Caco-2 (cell line): ENCODE measurements at regions of chr5 and their contacts with region 1.

Region 1: DNA sequence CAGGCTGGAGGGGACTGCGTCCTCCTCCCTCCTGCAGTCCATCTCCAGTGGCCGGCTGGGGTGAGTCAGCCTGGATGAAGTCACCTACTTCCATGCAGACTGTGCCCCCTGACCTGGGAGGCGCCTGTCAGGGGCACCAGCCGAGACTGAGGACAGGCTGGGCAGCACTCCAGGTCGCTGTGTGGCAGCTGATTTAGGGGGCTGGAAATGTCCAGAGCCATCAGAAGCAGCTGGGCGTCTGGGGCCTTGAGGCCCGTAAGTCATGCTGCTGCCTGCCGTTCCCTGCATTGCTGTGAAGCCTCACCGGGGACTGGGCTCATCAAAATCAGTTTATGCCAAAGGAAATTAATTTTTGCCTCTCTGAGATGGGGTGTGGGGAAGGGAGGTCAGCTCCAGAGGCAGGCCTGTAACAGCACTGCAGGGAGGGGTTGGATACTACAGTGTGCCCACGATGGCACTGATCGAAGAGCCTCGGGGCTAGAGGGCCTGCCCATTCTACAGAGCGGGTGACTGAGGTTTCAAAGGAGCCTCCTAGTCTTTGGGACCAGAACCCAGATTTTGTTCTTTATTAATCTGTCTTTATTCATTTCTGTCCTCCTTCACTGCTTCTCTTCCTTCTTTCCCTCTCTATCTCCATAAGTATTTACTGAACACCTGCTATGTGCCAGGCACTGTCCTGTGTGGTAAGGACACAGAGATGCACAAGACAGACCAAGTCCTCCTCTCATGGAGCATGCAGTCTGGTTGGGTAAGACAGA is 70.4 kb upstream of the PSD2 start:
- DNase-seq: no peak
- H3K4me3 ChIP-seq: no peak overlapping the region
- H3K4me3 Mint-ChIP-seq: no peak overlapping the region
- H3K27ac Mint-ChIP-seq: no peak overlapping the region
- H3K4me1 ChIP-seq: peaks cover 4% of the 10 kb centered on the region; the same call in 1 of the 2 replicates
- H3K4me1 Mint-ChIP-seq: peaks cover 8% of the 10 kb centered on the region
- H3K27me3 ChIP-seq: no peaks in the 10 kb centered on the region
- H3K27me3 Mint-ChIP-seq: no peaks in the 10 kb centered on the region
- CTCF ChIP-seq: no peak

Region 2: DNA sequence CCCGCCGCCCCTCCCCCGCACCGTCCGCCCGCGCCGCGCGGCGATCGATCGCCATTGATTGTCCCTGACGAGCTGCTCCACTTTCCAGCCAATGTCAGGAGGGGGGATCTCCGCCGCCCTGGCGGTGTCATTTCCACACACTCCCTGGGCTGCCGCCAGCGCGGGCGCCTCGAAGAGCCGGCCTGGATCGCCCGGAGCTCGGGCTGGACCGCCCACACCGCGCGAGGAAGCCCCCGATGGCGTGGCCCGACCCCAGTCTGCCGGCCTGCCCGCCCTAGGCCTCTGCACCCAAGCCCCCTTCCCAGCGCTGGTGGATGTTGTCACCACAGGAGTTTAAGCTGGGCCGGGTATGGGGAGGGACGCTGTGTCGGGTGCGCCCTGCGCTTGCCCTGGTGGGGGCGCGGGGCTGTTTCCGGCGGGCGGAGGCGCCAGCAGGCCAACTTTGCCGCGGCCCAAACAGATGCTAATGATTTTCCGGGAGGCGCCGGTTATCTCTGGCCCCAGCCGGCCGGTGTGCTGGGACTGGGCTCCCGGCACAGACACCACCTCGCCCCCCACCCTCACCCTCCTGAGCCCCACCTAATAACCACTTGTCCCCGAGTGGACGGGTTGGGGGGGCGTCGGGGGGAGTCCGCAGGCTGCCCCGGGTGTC is 87.7 kb before region 1 on chr5:
- CTCF ChIA-PET with region 1: no interaction called
- POLR2A ChIA-PET with region 1: no interaction called
- intact Hi-C with region 1: no loop called
- DNase-seq: peak in 1 of 2 experiments; percentile 42
- H3K4me3 ChIP-seq: no peak overlapping the region
- H3K4me3 Mint-ChIP-seq: no peak overlapping the region
- H3K27ac Mint-ChIP-seq: peak overlapping the region; percentile 82
- H3K4me1 ChIP-seq: peaks cover 49% of the 10 kb centered on the region
- H3K4me1 Mint-ChIP-seq: peaks cover 58% of the 10 kb centered on the region
- H3K27me3 ChIP-seq: no peaks in the 10 kb centered on the region
- H3K27me3 Mint-ChIP-seq: no peaks in the 10 kb centered on the region
- CTCF ChIP-seq: no peak

Region 3: GRCh38 chr5:139745800-139746690 is 20.8 kb after region 1 on chr5:
- CTCF ChIA-PET with region 1: no interaction called
- POLR2A ChIA-PET with region 1: no interaction called
- intact Hi-C with region 1: loop called (anchors 1 kb)
- DNase-seq: peak; percentile 82 to 86
- H3K4me3 ChIP-seq: peak overlapping the region; percentile 55
- H3K4me3 Mint-ChIP-seq: peak overlapping the region; percentile 92
- H3K27ac Mint-ChIP-seq: no peak overlapping the region
- H3K4me1 ChIP-seq: peaks cover 17% of the 10 kb centered on the region
- H3K4me1 Mint-ChIP-seq: peaks cover 31% of the 10 kb centered on the region
- H3K27me3 ChIP-seq: no peaks in the 10 kb centered on the region
- H3K27me3 Mint-ChIP-seq: no peaks in the 10 kb centered on the region
- CTCF ChIP-seq: no peak

Region 4: GRCh38 chr5:139828207-139828895 is 103.1 kb after region 1 on chr5:
- CTCF ChIA-PET with region 1: no interaction called
- POLR2A ChIA-PET with region 1: no interaction called
- intact Hi-C with region 1: no loop called
- DNase-seq: peak in 1 of 2 experiments; percentile 9
- H3K4me3 ChIP-seq: no peak overlapping the region
- H3K4me3 Mint-ChIP-seq: no peak overlapping the region
- H3K27ac Mint-ChIP-seq: no peak overlapping the region
- H3K4me1 ChIP-seq: no peaks in the 10 kb centered on the region
- H3K4me1 Mint-ChIP-seq: no peaks in the 10 kb centered on the region
- H3K27me3 ChIP-seq: no peaks in the 10 kb centered on the region; the same call in none of the 2 replicates
- H3K27me3 Mint-ChIP-seq: peaks cover 43% of the 10 kb centered on the region
- CTCF ChIP-seq: no peak

Region 5: DNA sequence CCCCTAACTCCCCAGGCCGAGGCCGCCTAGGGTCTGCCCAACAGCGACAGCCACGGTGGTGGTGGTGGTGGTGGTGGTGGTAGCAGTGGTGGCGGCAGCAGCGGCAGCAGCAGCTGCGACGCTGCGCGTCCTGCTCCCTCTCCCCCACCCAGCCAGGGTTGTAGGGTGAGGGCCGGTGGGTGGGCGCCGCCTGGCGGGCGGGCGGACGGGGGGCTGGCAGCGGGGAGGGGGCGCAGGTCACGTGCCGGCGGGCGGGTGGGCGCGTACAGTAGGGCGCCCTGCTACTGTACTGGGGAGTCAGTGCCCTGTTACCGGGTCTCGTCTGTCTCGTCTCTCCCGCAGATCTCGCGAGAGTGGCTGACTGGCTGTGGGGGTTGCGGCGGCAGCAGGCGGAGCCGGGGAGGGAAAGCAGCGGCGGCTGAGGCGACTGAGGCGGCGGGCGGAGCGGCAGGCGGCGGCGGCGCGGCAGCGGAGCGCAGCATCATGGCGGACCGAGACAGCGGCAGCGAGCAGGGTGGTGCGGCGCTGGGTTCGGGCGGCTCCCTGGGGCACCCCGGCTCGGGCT is 388.5 kb after region 1 on chr5 and contains the start of gene PURA:
- CTCF ChIA-PET with region 1: interaction called, 11 read pairs
- POLR2A ChIA-PET with region 1: no interaction called
- intact Hi-C with region 1: no loop called
- DNase-seq: peak; percentile 98
- H3K4me3 ChIP-seq: peak within 1 kb of the TSS; percentile 94
- H3K4me3 Mint-ChIP-seq: peak within 1 kb of the TSS; percentile 82
- H3K27ac Mint-ChIP-seq: peak within 1 kb of the TSS; percentile 87
- H3K4me1 ChIP-seq: peaks cover 10% of the 10 kb centered on the region
- H3K4me1 Mint-ChIP-seq: peaks cover 36% of the 10 kb centered on the region
- H3K27me3 ChIP-seq: no peaks in the 10 kb centered on the region
- H3K27me3 Mint-ChIP-seq: no peaks in the 10 kb centered on the region
- CTCF ChIP-seq: peak in 1 of 2 experiments; percentile 40
- total RNA-seq, gene PURA: 14.5 and 15.2 TPM in 2 replicates

Region 6: GRCh38 chr5:141001854-141002604 is 1276.8 kb after region 1 on chr5:
- CTCF ChIA-PET with region 1: no interaction called
- POLR2A ChIA-PET with region 1: no interaction called
- intact Hi-C with region 1: no loop called
- DNase-seq: no peak
- H3K4me3 ChIP-seq: peak overlapping the region; percentile 12; the same call in 1 of the 2 replicates
- H3K4me3 Mint-ChIP-seq: peak overlapping the region; percentile 50
- H3K27ac Mint-ChIP-seq: no peak overlapping the region
- H3K4me1 ChIP-seq: no peaks in the 10 kb centered on the region
- H3K4me1 Mint-ChIP-seq: no peaks in the 10 kb centered on the region
- H3K27me3 ChIP-seq: no peaks in the 10 kb centered on the region
- H3K27me3 Mint-ChIP-seq: no peaks in the 10 kb centered on the region
- CTCF ChIP-seq: no peak